ENCODE measurements at regions of chr12 and their contacts with region 1.

Region 1: DNA sequence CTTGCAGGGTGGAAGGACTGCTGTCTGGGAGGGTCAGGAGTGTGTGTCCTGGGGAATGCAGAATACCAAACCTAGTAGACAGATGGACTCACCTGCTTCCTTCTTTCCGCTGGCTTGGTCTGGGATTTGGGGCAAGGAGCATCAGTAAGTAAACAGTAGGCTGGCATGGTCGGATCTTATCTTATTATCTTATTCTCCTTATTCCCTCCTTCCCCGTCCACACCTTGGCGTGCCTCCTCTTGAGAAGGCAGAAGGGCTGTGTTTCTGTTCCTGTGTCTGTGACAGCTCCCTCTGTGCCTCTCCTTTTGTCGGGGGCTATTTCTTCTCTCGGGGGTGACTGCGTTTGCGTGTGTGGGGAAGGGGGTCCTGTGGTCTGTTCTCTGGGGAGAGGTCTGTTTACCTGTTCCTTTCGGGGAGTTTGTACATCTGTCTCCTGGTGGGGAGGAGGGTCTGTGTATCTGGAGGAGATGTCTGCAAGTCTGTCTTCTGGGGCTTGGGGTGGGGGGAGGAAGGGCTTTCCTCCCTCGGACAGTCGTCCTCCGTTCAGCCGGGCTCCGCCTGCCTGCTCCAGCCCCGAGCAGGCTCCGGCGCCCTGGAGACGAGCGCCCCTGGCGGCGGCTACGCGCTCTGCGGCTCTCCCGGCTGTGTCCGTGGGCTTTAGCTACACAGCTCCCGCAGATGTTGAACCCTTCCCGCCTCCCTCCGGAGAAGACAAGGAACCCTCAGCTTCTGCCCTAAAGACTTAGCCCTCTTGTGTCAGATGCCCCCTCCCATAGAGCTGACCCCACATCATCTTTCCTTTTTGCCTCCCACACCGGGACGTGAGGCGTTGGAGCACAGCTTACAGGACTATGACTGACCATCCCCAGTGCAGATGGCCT is 4.3 kb downstream of the KRT86 start:
- DNase-seq: no peak
- ATAC-seq: peak; percentile 100
- H3K4me3 ChIP-seq: no peak overlapping the region
- H3K27ac ChIP-seq: no peak overlapping the region
- H3K4me1 ChIP-seq: no peaks in the 10 kb centered on the region
- H3K27me3 ChIP-seq: peaks cover 3% of the 10 kb centered on the region in 2 experiments; a peak in 2 of 4 replicates
- CTCF ChIP-seq: peak; percentile 93 to 98 (median 96)
- EP300 ChIP-seq: no peak
- POLR2A ChIP-seq: no peak
- RAD21 ChIP-seq: peak; percentile 81

Region 2: GRCh38 chr12:51377099-51377984 is 901.4 kb before region 1 on chr12:
- CTCF ChIA-PET with region 1: no interaction called
- POLR2A ChIA-PET with region 1: no interaction called
- RAD21 ChIA-PET with region 1: no interaction called
- SMC1A ChIA-PET with region 1: no interaction called
- in situ Hi-C with region 1: no loop called
- intact Hi-C with region 1: no loop called
- DNase-seq: no peak
- ATAC-seq: no peak
- H3K4me3 ChIP-seq: no peak overlapping the region
- H3K27ac ChIP-seq: no peak overlapping the region
- H3K4me1 ChIP-seq: peaks cover 6% of the 10 kb centered on the region; the same call in 1 of the 2 replicates
- H3K27me3 ChIP-seq: no peaks in the 10 kb centered on the region
- CTCF ChIP-seq: peak in 1 of 3 experiments; percentile 12; a peak in 1 of 6 replicates
- EP300 ChIP-seq: no peak
- POLR2A ChIP-seq: no peak
- RAD21 ChIP-seq: no peak

Region 3: DNA sequence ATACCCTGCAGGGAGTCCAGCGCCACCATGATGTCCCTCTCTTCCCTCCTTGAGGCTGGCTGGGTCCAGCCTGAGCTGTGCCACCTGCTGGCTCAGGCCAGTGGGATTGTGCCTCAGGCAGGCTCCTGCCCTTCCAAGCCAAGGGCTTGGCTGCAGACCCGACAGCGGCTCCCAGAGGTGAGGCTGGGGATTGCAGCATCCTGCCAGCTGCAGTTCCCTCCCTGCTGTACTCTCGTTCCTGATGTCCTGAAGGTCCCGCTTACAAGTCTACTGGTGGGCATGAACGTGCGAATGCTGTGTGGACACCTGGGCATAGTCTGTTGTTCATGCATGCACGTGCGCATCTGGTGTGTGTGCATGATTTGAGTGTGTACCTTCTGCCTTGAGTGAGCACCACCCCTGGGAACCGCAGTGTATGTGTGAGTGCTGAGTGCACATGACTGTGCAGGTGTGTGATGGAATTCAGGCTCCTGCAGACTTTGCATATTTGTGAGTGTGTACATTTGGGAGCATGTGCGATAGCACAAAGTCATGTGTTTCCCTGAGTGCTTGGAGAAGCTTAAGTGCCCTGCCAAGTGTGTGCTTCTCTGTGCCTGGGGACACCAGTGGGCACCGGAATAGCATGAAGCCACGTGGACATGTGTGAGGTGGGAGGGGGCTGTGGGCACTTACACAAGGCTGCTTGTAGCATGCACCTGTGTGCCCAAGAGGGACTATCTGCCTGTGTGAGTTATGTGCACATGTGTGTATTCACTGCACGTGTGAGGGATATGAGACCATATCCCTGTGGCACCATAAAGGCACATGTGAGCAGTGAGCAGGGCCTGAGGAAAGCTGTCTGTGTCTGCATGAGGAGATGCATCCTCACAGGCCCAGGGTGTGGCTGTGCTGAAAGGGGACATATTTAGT is 65.0 kb before region 1 on chr12:
- CTCF ChIA-PET with region 1: interaction called, 84 read pairs
- POLR2A ChIA-PET with region 1: no interaction called
- RAD21 ChIA-PET with region 1: interaction called, 5 read pairs
- SMC1A ChIA-PET with region 1: interaction called, 3 read pairs
- in situ Hi-C with region 1: no loop called
- intact Hi-C with region 1: no loop called
- DNase-seq: no peak
- ATAC-seq: peak; percentile 94
- H3K4me3 ChIP-seq: no peak overlapping the region
- H3K27ac ChIP-seq: no peak overlapping the region
- H3K4me1 ChIP-seq: no peaks in the 10 kb centered on the region
- H3K27me3 ChIP-seq: peaks cover 0 to 6% of the 10 kb centered on the region in 2 experiments; a peak in 2 of 4 replicates
- CTCF ChIP-seq: peak; percentile 82 to 94 (median 83)
- EP300 ChIP-seq: no peak
- POLR2A ChIP-seq: no peak
- RAD21 ChIP-seq: peak; percentile 56

Region 4: GRCh38 chr12:52235822-52236692 is 42.7 kb before region 1 on chr12:
- CTCF ChIA-PET with region 1: interaction called, 20 read pairs
- POLR2A ChIA-PET with region 1: interaction called, 3 read pairs
- RAD21 ChIA-PET with region 1: interaction called, 3 read pairs
- SMC1A ChIA-PET with region 1: interaction called, 3 read pairs
- in situ Hi-C with region 1: no loop called
- intact Hi-C with region 1: no loop called
- DNase-seq: no peak
- ATAC-seq: no peak
- H3K4me3 ChIP-seq: no peak overlapping the region
- H3K27ac ChIP-seq: no peak overlapping the region
- H3K4me1 ChIP-seq: no peaks in the 10 kb centered on the region
- H3K27me3 ChIP-seq: peaks cover 4 to 12% of the 10 kb centered on the region in 2 experiments; a peak in 3 of 4 replicates
- CTCF ChIP-seq: no peak
- EP300 ChIP-seq: no peak
- POLR2A ChIP-seq: no peak
- RAD21 ChIP-seq: no peak

Region 5: GRCh38 chr12:52249051-52249461 is 29.7 kb before region 1 on chr12:
- CTCF ChIA-PET with region 1: interaction called, 42 read pairs
- POLR2A ChIA-PET with region 1: interaction called, 8 read pairs
- RAD21 ChIA-PET with region 1: interaction called, 8 read pairs
- SMC1A ChIA-PET with region 1: interaction called, 7 read pairs
- in situ Hi-C with region 1: no loop called
- intact Hi-C with region 1: no loop called
- DNase-seq: no peak
- ATAC-seq: no peak
- H3K4me3 ChIP-seq: no peak overlapping the region
- H3K27ac ChIP-seq: no peak overlapping the region
- H3K4me1 ChIP-seq: peaks cover 13% of the 10 kb centered on the region
- H3K27me3 ChIP-seq: no peaks in the 10 kb centered on the region; a peak in 1 of 4 replicates
- CTCF ChIP-seq: no peak
- EP300 ChIP-seq: no peak
- POLR2A ChIP-seq: no peak
- RAD21 ChIP-seq: no peak

Region 6: GRCh38 chr12:52295663-52296062 is 16.9 kb after region 1 on chr12:
- CTCF ChIA-PET with region 1: interaction called, 39 read pairs
- POLR2A ChIA-PET with region 1: interaction called, 4 read pairs
- RAD21 ChIA-PET with region 1: no interaction called
- SMC1A ChIA-PET with region 1: no interaction called
- in situ Hi-C with region 1: no loop called
- intact Hi-C with region 1: no loop called
- DNase-seq: no peak
- ATAC-seq: no peak
- H3K4me3 ChIP-seq: no peak overlapping the region
- H3K27ac ChIP-seq: no peak overlapping the region
- H3K4me1 ChIP-seq: no peaks in the 10 kb centered on the region
- H3K27me3 ChIP-seq: peaks cover 0 to 1% of the 10 kb centered on the region in 2 experiments; a peak in 2 of 4 replicates
- CTCF ChIP-seq: no peak
- EP300 ChIP-seq: no peak
- POLR2A ChIP-seq: no peak
- RAD21 ChIP-seq: no peak

Region 7: GRCh38 chr12:52327052-52327829 is 48.5 kb after region 1 on chr12:
- CTCF ChIA-PET with region 1: interaction called, 23 read pairs
- POLR2A ChIA-PET with region 1: no interaction called
- RAD21 ChIA-PET with region 1: interaction called, 6 read pairs
- SMC1A ChIA-PET with region 1: interaction called, 4 read pairs
- in situ Hi-C with region 1: no loop called
- intact Hi-C with region 1: loop called (anchors 1 kb)
- DNase-seq: peak; percentile 76
- ATAC-seq: peak; percentile 99
- H3K4me3 ChIP-seq: no peak overlapping the region
- H3K27ac ChIP-seq: no peak overlapping the region
- H3K4me1 ChIP-seq: peaks cover 7% of the 10 kb centered on the region
- H3K27me3 ChIP-seq: peaks cover 0 to 5% of the 10 kb centered on the region in 2 experiments
- CTCF ChIP-seq: peak; percentile 88 to 100 (median 93)
- EP300 ChIP-seq: no peak
- POLR2A ChIP-seq: no peak
- RAD21 ChIP-seq: peak; percentile 73

Measured in GM12878 (cell line).